Uterus (tissue), 4 donors: ENCODE measurements at regions of chr15 and their contacts with region 1.

Region 1: DNA sequence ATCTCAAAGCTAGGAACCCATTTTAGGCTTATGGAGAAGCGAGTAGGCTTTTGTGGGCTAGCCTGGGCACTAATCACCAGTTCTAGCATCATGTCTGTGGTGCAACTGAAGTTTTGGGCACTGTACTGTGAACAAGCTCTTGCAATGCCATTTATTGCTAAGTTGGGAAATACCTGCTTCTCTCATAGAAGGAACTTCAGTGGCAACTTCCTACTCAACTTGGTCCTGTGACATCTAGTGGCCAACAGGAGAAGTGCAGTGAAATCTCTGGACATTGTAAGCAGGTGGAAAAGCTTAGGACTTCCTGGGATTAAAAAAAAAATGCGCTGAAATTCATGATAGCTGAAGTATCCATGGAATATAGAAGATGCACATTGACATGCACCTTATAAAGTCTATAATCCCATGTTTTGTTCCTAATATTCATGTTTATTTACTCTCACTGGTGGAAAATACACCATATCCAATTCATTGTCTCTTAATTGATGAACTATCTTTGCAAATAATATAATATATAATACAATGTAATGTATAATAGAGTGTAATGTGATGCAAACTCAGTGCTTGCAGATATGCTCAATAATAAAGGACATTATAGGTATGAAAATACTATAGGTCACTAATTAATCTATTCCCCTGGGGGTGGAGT is 6.5 kb upstream of the ALDH1A3 start:
- DNase-seq: peak; percentile 61 to 84
- H3K4me3 ChIP-seq: no peak overlapping the region
- H3K27ac ChIP-seq: no peak overlapping the region
- H3K4me1 ChIP-seq: no peaks in the 10 kb centered on the region
- H3K27me3 ChIP-seq: no peaks in the 10 kb centered on the region
- CTCF ChIP-seq: peak; percentile 88 to 98 (median 94)
- POLR2A ChIP-seq: peak in 1 of 2 donors; percentile 21

Region 2: DNA sequence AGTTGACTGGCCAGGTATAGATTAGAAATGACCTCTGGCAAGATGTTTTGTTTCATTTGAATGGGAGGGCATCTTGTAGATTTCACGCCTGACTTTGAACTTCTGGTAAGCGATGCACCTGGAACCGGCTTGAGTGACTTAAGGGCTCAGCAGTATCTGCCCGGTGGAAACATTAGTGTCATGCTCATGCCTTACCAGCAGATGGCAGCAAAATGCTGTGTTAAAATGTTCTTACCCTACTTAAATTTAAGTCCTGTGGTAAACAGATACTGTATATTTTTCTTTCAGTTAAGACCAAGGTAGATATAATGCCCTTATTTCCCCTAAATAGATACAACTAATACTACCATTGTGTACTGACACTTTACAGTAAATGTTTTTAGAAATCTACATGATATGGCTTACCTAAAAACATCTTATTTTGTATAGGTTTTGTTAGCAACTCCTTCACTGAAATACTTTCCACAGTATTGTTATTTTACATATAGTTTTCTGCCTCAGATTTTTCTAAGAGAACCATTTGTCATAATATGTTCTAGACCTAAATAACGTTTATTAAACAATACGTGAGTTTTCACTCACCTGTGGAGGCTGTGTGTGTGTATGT is 245.3 kb before region 1 on chr15:
- intact Hi-C with region 1: loop called (anchors 5 kb)
- DNase-seq: peak; percentile 67 to 78
- H3K4me3 ChIP-seq: no peak overlapping the region
- H3K27ac ChIP-seq: peak overlapping the region; percentile 1 to 45
- H3K4me1 ChIP-seq: no peaks in the 10 kb centered on the region
- H3K27me3 ChIP-seq: no peaks in the 10 kb centered on the region
- CTCF ChIP-seq: peak; percentile 77 to 90 (median 88)
- POLR2A ChIP-seq: no peak

Region 3: GRCh38 chr15:100663086-100663914 is 209.9 kb before region 1 on chr15:
- intact Hi-C with region 1: loop called (anchors 10 kb)
- DNase-seq: peak in 1 of 2 donors; percentile 19
- H3K4me3 ChIP-seq: no peak overlapping the region
- H3K27ac ChIP-seq: peak overlapping the region; percentile 53 to 67
- H3K4me1 ChIP-seq: no peaks in the 10 kb centered on the region
- H3K27me3 ChIP-seq: no peaks in the 10 kb centered on the region
- CTCF ChIP-seq: peak in 1 of 4 experiments; percentile 20
- POLR2A ChIP-seq: no peak

Region 4: GRCh38 chr15:100940767-100941379 is 67.7 kb after region 1 on chr15:
- intact Hi-C with region 1: no loop called
- DNase-seq: no peak
- H3K4me3 ChIP-seq: no peak overlapping the region
- H3K27ac ChIP-seq: no peak overlapping the region
- H3K4me1 ChIP-seq: no peaks in the 10 kb centered on the region
- H3K27me3 ChIP-seq: no peaks in the 10 kb centered on the region
- CTCF ChIP-seq: no peak
- POLR2A ChIP-seq: no peak